ENCODE measurements at regions of chr13 and their contacts with region 1.

Region 1: GRCh38 chr13:99322297-99323103 is 15.3 kb upstream of the GPR183 start:
- DNase-seq: peak; percentile 53
- H3K4me3 Mint-ChIP-seq: peak overlapping the region; percentile 27
- H3K27ac Mint-ChIP-seq: peak overlapping the region; percentile 93
- H3K4me1 Mint-ChIP-seq: peaks cover 84% of the 10 kb centered on the region
- H3K27me3 Mint-ChIP-seq: no peaks in the 10 kb centered on the region

Region 2: DNA sequence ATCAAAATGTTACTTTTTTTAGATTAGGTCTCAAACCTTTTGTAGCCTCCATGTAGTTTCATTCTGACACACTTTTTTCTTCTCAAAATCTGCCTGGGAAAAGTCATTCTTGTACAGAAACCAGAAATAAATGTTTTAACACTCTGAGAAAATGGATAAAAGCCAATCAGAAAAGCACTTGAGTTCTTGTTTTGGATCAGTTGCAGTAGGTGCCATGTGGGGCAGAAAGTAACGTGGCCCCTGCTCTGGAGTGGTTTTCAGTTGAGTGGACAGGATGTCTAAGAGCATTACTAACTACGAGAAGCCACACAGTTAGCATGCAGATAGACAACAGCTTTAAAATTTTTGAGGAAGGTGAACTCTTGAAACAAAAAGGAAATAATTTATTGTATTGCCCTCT is 34.4 kb before region 1 on chr13:
- CTCF ChIA-PET with region 1: interaction called, 3 read pairs
- POLR2A ChIA-PET with region 1: no interaction called
- intact Hi-C with region 1: loop called (anchors 1 kb)
- DNase-seq: peak; percentile 87
- H3K4me3 Mint-ChIP-seq: no peak overlapping the region
- H3K27ac Mint-ChIP-seq: peak overlapping the region; percentile 80
- H3K4me1 Mint-ChIP-seq: peaks cover 85% of the 10 kb centered on the region
- H3K27me3 Mint-ChIP-seq: no peaks in the 10 kb centered on the region

Region 3: GRCh38 chr13:99296398-99296797 is 26.1 kb before region 1 on chr13:
- CTCF ChIA-PET with region 1: interaction called, 4 read pairs
- POLR2A ChIA-PET with region 1: interaction called, 6 read pairs
- intact Hi-C with region 1: loop called (anchors 1 kb)
- DNase-seq: no peak
- H3K4me3 Mint-ChIP-seq: peak overlapping the region; percentile 47
- H3K27ac Mint-ChIP-seq: peak overlapping the region; percentile 88
- H3K4me1 Mint-ChIP-seq: peaks cover 80% of the 10 kb centered on the region
- H3K27me3 Mint-ChIP-seq: no peaks in the 10 kb centered on the region

Region 4: DNA sequence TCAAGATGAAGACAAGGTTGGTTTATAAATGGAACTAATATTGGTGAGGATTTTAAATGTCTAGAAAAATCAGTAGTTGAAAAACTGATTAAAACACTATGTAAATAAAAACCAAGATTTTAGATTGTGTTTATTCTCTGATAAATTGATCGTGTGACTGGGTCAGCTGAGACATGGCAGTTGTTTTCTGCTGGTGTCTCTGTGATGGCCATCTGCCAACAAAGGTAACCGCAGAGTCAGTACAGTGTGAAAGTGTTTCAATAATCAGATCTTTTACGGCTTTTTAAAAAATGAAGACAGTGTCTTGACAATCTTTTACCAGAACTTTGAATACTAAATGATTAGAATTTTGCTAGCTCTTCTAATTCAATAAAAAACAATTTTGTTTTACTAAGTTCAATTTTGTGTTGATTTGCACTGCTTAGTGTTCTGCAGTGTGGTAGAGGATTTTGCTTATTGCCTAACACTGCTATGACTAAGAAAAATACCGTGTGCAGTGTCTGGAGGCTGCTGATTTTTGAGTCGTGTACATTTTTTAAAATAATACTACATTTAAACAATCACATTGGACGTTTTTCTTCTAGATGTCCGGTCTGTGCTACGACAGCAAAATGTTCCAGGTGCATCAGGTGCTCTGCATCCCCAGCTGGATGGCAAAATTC is 17.4 kb after region 1 on chr13:
- CTCF ChIA-PET with region 1: interaction called, 6 read pairs
- POLR2A ChIA-PET with region 1: interaction called, 8 read pairs
- intact Hi-C with region 1: loop called (anchors 2 kb)
- DNase-seq: peak; percentile 68
- H3K4me3 Mint-ChIP-seq: peak overlapping the region; percentile 12
- H3K27ac Mint-ChIP-seq: no peak overlapping the region
- H3K4me1 Mint-ChIP-seq: peaks cover 72% of the 10 kb centered on the region
- H3K27me3 Mint-ChIP-seq: no peaks in the 10 kb centered on the region

Region 5: DNA sequence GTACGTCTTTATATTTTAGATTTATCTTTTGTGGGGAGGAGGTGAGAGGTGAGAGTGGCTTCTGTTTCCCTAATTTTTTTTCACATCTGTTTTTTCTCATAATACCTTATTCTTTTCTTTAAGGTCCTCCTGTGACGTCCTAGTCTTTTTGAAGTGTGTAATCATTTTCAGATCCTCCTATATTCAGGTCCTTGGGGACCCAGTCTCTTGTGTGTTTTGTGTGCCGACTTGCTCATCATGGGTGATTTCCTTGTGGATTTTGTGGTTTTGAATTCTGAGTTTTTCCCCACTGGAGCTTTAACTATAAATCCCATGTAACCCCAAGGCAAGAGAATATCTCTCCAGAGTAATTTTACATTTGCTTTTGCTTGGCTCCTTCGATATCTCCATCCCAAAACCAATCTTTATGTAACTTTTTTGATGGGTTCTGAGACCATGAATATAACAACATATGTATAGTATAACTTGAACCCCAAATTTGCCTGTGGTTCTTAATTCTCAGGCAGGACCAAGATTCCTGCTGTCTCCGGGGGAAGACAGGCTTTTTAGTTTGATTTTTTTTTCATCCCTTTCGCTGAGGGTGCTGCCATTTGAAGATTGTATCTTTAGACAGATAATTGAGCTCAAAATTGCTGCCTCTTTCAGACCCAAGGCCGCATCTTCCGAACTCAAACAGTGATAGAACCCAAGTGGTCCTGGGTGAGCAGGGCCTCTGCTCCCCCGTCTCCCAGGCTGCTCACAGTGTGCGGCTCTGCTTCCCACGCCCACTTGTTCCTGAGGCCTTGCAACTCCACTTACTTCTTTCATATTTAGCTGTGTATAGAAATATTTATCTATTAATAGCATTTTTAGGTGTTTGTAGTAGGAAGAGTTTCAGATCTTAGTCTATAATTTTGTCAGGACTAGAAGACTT is 43.8 kb after region 1 on chr13:
- CTCF ChIA-PET with region 1: no interaction called
- POLR2A ChIA-PET with region 1: interaction called, 5 read pairs
- intact Hi-C with region 1: loop called (anchors 1 kb)
- DNase-seq: no peak
- H3K4me3 Mint-ChIP-seq: peak overlapping the region; percentile 13
- H3K27ac Mint-ChIP-seq: peak overlapping the region; percentile 15
- H3K4me1 Mint-ChIP-seq: peaks cover 87% of the 10 kb centered on the region
- H3K27me3 Mint-ChIP-seq: no peaks in the 10 kb centered on the region

Region 6: GRCh38 chr13:99380921-99381645 is 58.6 kb after region 1 on chr13:
- CTCF ChIA-PET with region 1: interaction called, 3 read pairs
- POLR2A ChIA-PET with region 1: interaction called, 10 read pairs
- intact Hi-C with region 1: loop called (anchors 1 kb)
- DNase-seq: peak; percentile 87
- H3K4me3 Mint-ChIP-seq: peak overlapping the region; percentile 36
- H3K27ac Mint-ChIP-seq: peak overlapping the region; percentile 89
- H3K4me1 Mint-ChIP-seq: peaks cover 84% of the 10 kb centered on the region
- H3K27me3 Mint-ChIP-seq: no peaks in the 10 kb centered on the region

Region 7: GRCh38 chr13:100262404-100262803 is 939.9 kb after region 1 on chr13:
- CTCF ChIA-PET with region 1: no interaction called
- POLR2A ChIA-PET with region 1: no interaction called
- intact Hi-C with region 1: no loop called
- DNase-seq: no peak
- H3K4me3 Mint-ChIP-seq: no peak overlapping the region
- H3K27ac Mint-ChIP-seq: no peak overlapping the region
- H3K4me1 Mint-ChIP-seq: no peaks in the 10 kb centered on the region
- H3K27me3 Mint-ChIP-seq: no peaks in the 10 kb centered on the region